Activated B cell treated with CpG ODN at 0.5 μM for 24 hours (primary cell): ENCODE measurements at regions of chr17 and their contacts with region 1.

Region 1: GRCh38 chr17:9291912-9292560 is 270.7 kb downstream of the NTN1 start:
- DNase-seq: no peak
- ATAC-seq: peak; percentile 72
- H3K4me3 Mint-ChIP-seq: no peak overlapping the region
- H3K27ac Mint-ChIP-seq: no peak overlapping the region
- H3K4me1 Mint-ChIP-seq: peaks cover 25% of the 10 kb centered on the region
- H3K27me3 Mint-ChIP-seq: no peaks in the 10 kb centered on the region
- CTCF ChIP-seq: peak; percentile 41

Region 2: GRCh38 chr17:8991514-8992285 is 300.3 kb before region 1 on chr17:
- CTCF ChIA-PET with region 1: interaction called, 3 read pairs
- POLR2A ChIA-PET with region 1: no interaction called
- intact Hi-C with region 1: loop called (anchors 5 kb)
- DNase-seq: no peak
- ATAC-seq: peak; percentile 53
- H3K4me3 Mint-ChIP-seq: no peak overlapping the region
- H3K27ac Mint-ChIP-seq: no peak overlapping the region
- H3K4me1 Mint-ChIP-seq: peaks cover 2% of the 10 kb centered on the region
- H3K27me3 Mint-ChIP-seq: peaks cover 2% of the 10 kb centered on the region
- CTCF ChIP-seq: peak; percentile 66

Region 3: GRCh38 chr17:9115446-9116191 is 176.4 kb before region 1 on chr17:
- CTCF ChIA-PET with region 1: interaction called, 13 read pairs
- POLR2A ChIA-PET with region 1: no interaction called
- intact Hi-C with region 1: loop called (anchors 1 kb)
- DNase-seq: peak; percentile 23
- ATAC-seq: peak; percentile 73
- H3K4me3 Mint-ChIP-seq: peak overlapping the region; percentile 57
- H3K27ac Mint-ChIP-seq: no peak overlapping the region
- H3K4me1 Mint-ChIP-seq: peaks cover 8% of the 10 kb centered on the region
- H3K27me3 Mint-ChIP-seq: peaks cover 21% of the 10 kb centered on the region
- CTCF ChIP-seq: no peak

Region 4: GRCh38 chr17:9144502-9145249 is 147.4 kb before region 1 on chr17:
- CTCF ChIA-PET with region 1: no interaction called
- POLR2A ChIA-PET with region 1: no interaction called
- intact Hi-C with region 1: no loop called
- DNase-seq: no peak
- ATAC-seq: no peak
- H3K4me3 Mint-ChIP-seq: no peak overlapping the region
- H3K27ac Mint-ChIP-seq: no peak overlapping the region
- H3K4me1 Mint-ChIP-seq: no peaks in the 10 kb centered on the region
- H3K27me3 Mint-ChIP-seq: peaks cover 4% of the 10 kb centered on the region
- CTCF ChIP-seq: no peak

Region 5: DNA sequence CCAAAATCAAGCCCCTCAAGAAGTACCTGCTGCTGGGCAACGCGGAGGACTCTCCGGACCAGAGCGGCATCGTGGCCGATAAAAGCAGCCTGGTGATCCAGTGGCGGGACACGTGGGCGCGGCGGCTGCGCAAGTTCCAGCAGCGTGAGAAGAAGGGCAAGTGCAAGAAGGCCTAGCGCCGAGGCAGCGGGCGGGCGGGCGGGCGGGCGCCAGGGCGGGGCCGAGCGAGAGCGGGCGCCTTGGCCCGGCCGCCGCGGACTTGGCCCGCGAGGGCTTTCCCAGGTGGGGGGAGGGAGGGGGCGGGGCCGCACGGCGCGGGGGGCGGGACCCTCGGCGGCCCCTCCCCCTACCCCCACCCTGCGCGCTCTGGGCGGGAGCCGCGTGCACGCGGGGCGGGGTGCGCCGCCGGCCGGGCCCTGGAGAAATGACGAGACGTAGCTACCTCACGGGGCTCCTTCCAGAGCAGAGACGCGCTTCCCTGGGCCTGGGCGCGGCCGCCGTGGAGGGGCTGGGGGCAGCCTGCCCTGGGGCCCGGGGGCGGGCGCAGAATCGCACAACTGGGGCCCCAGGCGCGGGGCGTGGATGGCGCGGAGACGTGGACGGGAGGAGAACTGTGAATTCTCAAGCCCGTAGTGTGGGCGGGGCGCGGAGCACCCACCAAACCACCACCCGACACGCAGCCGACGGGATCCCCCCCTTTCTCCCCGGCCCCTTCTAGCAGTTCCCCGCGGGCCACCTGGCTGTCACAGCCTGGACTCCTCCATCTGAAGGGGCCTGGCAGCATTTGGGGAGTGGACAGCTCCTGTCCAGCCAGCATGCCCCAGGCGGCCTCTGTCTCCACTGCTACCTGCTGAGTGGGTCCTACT is 52.0 kb before region 1 on chr17:
- CTCF ChIA-PET with region 1: interaction called, 3 read pairs
- POLR2A ChIA-PET with region 1: no interaction called
- intact Hi-C with region 1: loop called (anchors 5 kb)
- DNase-seq: peak; percentile 75
- ATAC-seq: peak; percentile 86
- H3K4me3 Mint-ChIP-seq: peak overlapping the region; percentile 82
- H3K27ac Mint-ChIP-seq: peak overlapping the region; percentile 53
- H3K4me1 Mint-ChIP-seq: peaks cover 15% of the 10 kb centered on the region
- H3K27me3 Mint-ChIP-seq: no peaks in the 10 kb centered on the region
- CTCF ChIP-seq: no peak